Sigmoid colon (tissue), 7 donors: ENCODE measurements at regions of chr7 and their contacts with region 1.

Region 1: DNA sequence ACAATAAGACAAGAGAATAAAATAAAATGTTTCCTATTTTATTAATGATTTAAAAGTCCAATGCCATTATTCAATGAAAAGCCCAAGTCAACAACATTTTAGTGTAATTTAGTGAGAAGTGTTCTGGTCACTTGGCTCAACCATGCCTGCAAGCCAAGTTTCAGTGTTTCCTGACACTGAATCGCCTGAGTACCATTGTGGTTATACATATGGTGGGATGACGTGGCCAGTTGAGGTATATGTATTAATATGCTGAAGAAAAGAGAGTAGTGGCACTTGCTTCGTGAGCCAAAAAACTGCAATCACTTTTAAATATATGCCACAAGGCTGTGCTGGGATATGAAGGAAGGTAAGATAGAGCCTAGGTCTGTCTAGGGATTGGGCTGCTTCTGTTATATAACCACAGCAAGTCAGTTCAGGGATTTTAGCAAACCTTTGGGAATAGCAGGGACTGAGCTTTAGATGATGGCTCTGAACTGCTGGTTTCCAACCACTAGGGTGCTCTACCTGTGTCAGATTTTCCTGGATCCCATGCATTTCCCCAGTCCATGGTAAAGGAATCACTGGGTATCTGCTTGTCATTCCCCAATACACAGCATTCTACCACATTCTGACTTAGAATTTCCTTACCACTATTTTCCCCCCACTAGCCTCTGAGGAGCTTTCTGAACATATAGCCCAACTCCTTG is 214.0 kb upstream of the PRPS1L1 start:
- DNase-seq: no peak
- H3K4me3 ChIP-seq: no peak overlapping the region
- H3K27ac ChIP-seq: no peak overlapping the region
- H3K4me1 ChIP-seq: peaks cover 0 to 12% (median 0%) of the 10 kb centered on the region in 4 donors
- H3K27me3 ChIP-seq: no peaks in the 10 kb centered on the region
- CTCF ChIP-seq: no peak
- EP300 ChIP-seq: no peak
- POLR2A ChIP-seq: no peak

Region 2: DNA sequence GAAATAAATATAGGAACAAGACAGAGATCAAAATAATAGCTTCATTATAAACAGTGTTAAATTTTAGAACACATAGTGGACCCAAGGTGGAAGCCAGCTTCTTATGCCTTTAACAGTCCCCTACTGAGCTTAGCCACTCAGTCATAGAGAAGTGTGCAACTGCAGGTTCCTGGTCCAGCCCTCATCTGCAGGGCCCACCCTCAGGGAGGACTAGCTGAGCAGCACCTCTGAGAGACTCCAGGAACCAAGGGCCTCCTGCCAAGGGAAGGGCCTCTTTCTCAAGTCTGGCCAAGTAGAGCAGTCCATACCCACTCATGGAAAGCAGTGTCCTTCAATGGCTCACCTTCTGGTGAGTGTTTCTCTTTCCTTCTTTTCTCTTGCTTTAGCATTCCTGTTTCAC is 40.3 kb before region 1 on chr7:
- intact Hi-C with region 1: loop called (anchors 1 kb)
- DNase-seq: no peak
- H3K4me3 ChIP-seq: no peak overlapping the region
- H3K27ac ChIP-seq: peak overlapping the region in 3 of 4 donors; percentile 13 to 39 (median 23)
- H3K4me1 ChIP-seq: peaks cover 0 to 15% (median 7%) of the 10 kb centered on the region in 4 donors
- H3K27me3 ChIP-seq: no peaks in the 10 kb centered on the region
- CTCF ChIP-seq: no peak
- EP300 ChIP-seq: no peak
- POLR2A ChIP-seq: no peak